ENCODE measurements at regions of chr9 and their contacts with region 1.

Region 1: GRCh38 chr9:78468231-78468630 is 171.3 kb downstream of the PSAT1 start:
- DNase-seq: no peak
- H3K4me3 ChIP-seq: no peak overlapping the region
- H3K27ac ChIP-seq: no peak overlapping the region
- H3K4me1 ChIP-seq: no peaks in the 10 kb centered on the region
- H3K27me3 ChIP-seq: no peaks in the 10 kb centered on the region
- CTCF ChIP-seq: no peak
- POLR2A ChIP-seq: no peak

Region 2: GRCh38 chr9:77507212-77507961 is 960.8 kb before region 1 on chr9:
- intact Hi-C with region 1: loop called (anchors 5 kb)
- DNase-seq: no peak
- H3K4me3 ChIP-seq: no peak overlapping the region
- H3K27ac ChIP-seq: peak overlapping the region in 1 of 2 donors; percentile 52
- H3K4me1 ChIP-seq: no peaks in the 10 kb centered on the region
- H3K27me3 ChIP-seq: no peaks in the 10 kb centered on the region
- CTCF ChIP-seq: no peak
- POLR2A ChIP-seq: no peak

Measured in breast epithelium (tissue), 4 donors.